ENCODE measurements at regions of chr10 and their contacts with region 1.

Region 1: DNA sequence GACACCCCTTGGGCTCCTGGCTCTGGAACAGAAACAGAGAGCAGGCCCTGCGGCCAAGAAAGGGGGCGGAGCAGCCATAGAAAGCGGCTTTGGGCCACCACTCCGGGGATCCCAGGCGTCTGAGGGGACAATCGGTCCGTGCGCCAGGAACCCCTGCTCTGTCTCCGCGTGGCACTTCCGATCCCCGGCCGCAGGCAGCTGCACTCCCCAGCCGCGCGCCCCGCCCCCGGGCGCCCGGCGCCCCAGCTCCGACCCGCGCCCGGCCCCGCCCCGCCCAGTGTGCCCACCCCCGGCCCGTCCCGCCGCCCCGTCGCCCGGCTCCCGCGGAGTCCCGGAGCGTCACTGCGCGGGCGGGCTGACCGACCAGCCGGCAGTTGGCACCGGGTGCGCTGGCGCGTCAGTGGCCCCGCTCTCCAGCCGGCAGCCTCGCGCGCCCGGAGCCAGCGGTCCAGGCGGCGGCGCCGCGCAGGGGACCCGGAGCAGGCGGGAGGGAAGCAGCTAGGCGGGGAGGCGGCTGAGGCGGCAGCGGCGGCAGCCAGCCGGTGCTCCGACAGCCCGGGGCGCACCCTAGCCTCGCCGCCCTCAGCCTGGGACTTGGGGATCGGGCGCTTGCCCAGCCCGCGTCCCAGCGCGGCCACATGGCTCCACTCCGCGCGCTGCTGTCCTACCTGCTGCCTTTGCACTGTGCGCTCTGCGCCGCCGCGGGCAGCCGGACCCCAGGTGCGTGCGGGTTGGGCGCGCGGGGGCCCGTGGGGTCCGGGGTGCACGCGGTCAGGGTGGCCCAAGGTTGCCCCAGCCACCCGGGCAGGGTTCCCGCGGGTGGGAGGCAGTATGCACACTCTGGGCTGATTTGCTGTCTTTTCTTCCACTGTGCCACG is at the start of gene ADAMTS14:
- DNase-seq: no peak
- ATAC-seq: peak; percentile 52
- H3K4me3 ChIP-seq: no peak within 1 kb of the TSS
- H3K27ac ChIP-seq: no peak within 1 kb of the TSS
- H3K4me1 ChIP-seq: peaks cover 3% of the 10 kb centered on the region
- H3K27me3 ChIP-seq: peaks cover 2 to 21% of the 10 kb centered on the region in 2 experiments
- CTCF ChIP-seq: no peak
- EP300 ChIP-seq: no peak
- POLR2A ChIP-seq: no peak
- RAD21 ChIP-seq: no peak
- total RNA-seq, gene ADAMTS14: 0.04 TPM in 1 of 2 replicates, not detected in the other

Region 2: GRCh38 chr10:70549962-70550458 is 122.4 kb before region 1 on chr10:
- CTCF ChIA-PET with region 1: no interaction called
- POLR2A ChIA-PET with region 1: no interaction called
- in situ Hi-C with region 1: no loop called
- intact Hi-C with region 1: loop called (anchors 10 kb)
- DNase-seq: peak; percentile 44
- ATAC-seq: peak; percentile 82
- H3K4me3 ChIP-seq: no peak overlapping the region
- H3K27ac ChIP-seq: no peak overlapping the region
- H3K4me1 ChIP-seq: peaks cover 21% of the 10 kb centered on the region
- H3K27me3 ChIP-seq: peaks cover 1 to 4% of the 10 kb centered on the region in 2 experiments; a peak in 2 of 5 replicates
- CTCF ChIP-seq: peak; percentile 93
- EP300 ChIP-seq: no peak
- POLR2A ChIP-seq: no peak
- RAD21 ChIP-seq: peak; percentile 84